Lower leg skin (tissue), 4 donors: ENCODE measurements at regions of chr3 and their contacts with region 1.

Region 1: DNA sequence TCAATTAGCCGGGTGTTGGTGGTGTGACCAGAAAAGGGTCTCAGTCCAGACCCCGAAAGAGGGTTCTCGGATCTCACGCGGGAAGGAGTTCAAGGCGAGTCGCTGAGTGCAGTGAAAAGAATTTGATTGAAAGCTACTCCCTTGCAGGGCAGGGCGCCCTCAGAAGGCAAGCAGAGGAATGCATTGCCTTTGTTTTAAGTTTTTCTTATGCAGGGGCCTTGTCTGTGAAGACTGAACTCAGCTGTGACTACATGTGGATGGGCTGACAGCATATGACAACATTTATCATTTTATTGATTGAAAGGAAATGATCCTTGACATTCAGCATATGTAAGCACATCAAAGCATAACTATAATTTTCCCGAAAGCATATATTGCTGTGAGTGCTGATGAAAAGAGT is 11.8 kb downstream of the CPN2 start:
- DNase-seq: no peak
- H3K4me3 ChIP-seq: no peak overlapping the region
- CTCF ChIP-seq: no peak
- POLR2A ChIP-seq: no peak

Region 2: DNA sequence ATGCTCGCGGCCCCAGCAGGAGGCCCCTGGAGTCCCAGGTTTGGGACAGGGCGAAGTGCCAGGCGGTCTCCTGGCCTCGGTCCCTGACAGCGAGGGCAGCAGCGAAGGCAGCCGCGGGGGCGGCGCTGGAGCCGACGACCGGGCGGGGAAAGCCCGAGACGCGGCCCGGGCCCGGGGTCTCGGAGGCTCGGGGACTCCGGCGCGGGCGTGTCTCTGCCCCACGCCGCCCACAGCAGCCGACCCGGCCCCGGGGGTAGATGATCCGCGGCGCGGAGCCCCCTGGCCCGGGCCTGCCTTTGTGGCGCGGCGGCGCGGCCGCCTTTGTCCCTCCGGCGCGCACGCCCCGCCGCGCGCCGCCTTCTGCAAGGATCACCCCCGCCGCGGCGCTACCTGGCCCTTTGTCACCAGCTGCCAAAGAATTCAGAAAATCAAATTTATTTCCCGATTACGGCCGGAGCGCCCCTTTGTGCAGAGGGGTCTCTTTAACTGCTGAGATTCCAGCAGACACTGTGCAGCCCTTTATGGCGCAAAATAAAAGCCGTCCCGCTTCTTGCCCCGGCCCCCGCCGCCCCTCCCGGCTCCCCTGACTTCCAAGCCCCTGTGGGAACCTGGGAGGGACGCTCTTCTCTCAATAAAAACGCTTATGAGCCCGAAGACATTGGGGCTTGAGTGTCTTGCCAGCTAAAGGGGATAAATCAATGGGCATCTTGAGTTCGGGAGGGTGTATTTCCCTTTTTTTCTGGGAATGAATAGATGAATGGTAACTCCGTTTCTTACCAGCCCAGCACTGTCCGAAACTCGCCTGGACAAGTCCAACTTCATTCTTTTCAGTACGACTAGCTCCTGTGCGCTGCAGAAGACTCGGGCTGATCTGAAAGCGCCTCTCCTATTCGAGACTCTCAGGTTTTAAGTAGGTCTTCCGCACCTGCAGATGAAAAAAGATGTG is 135.0 kb before region 1 on chr3:
- intact Hi-C with region 1: no loop called
- DNase-seq: no peak
- H3K4me3 ChIP-seq: no peak overlapping the region
- CTCF ChIP-seq: no peak
- POLR2A ChIP-seq: no peak

Region 3: GRCh38 chr3:194395778-194396547 is 56.6 kb after region 1 on chr3:
- intact Hi-C with region 1: loop called (anchors 5 kb)
- DNase-seq: peak in 1 of 2 donors; percentile 56
- H3K4me3 ChIP-seq: no peak overlapping the region
- CTCF ChIP-seq: no peak
- POLR2A ChIP-seq: no peak